ENCODE measurements at regions of chr6 and their contacts with region 1.

Region 1: GRCh38 chr6:145368075-145368474 is 367.2 kb downstream of the EPM2A start:
- DNase-seq: no peak
- H3K4me3 ChIP-seq: no peak overlapping the region
- H3K27ac ChIP-seq: no peak overlapping the region
- H3K4me1 ChIP-seq: no peaks in the 10 kb centered on the region
- H3K27me3 ChIP-seq: no peaks in the 10 kb centered on the region
- CTCF ChIP-seq: no peak
- EP300 ChIP-seq: no peak
- POLR2A ChIP-seq: no peak

Region 2: GRCh38 chr6:144653885-144654505 is 714.1 kb before region 1 on chr6:
- intact Hi-C with region 1: no loop called
- DNase-seq: no peak
- H3K4me3 ChIP-seq: no peak overlapping the region
- H3K27ac ChIP-seq: no peak overlapping the region
- H3K4me1 ChIP-seq: no peaks in the 10 kb centered on the region
- H3K27me3 ChIP-seq: no peaks in the 10 kb centered on the region
- CTCF ChIP-seq: no peak
- EP300 ChIP-seq: no peak
- POLR2A ChIP-seq: no peak

Region 3: DNA sequence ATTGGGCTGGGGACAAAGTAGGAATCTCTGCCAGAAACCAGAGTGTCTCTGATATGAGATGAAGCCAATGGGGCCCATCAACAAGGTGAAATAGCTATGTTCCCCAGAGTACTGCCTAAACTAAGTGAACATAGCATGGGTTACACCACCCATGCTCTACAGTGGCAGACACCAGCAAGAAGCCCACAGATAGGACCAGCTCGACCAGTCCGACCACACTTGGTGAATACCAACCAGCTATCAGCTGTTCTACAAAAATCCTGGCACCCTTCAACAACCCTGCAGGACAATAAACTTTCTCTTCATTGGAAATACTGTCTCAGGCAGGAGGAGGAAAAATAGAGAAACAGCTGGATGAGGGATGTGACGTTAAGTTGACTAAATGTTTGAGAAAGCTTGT is 55.8 kb after region 1 on chr6:
- intact Hi-C with region 1: loop called in 1 of 4 experiments (anchors 5 kb)
- DNase-seq: no peak
- H3K4me3 ChIP-seq: no peak overlapping the region
- H3K27ac ChIP-seq: no peak overlapping the region
- H3K4me1 ChIP-seq: no peaks in the 10 kb centered on the region
- H3K27me3 ChIP-seq: no peaks in the 10 kb centered on the region
- CTCF ChIP-seq: no peak
- EP300 ChIP-seq: no peak
- POLR2A ChIP-seq: no peak

Measured in ovary (tissue), 10 donors.